ENCODE measurements at regions of chr19 and their contacts with region 1.

Region 1: GRCh38 chr19:11374433-11375142 is at the start of gene SWSAP1:
- DNase-seq: peak; percentile 95
- ATAC-seq: peak; percentile 91
- H3K4me3 Mint-ChIP-seq: peak within 1 kb of the TSS; percentile 36
- H3K27ac Mint-ChIP-seq: no peak within 1 kb of the TSS
- H3K4me1 Mint-ChIP-seq: peaks cover 13% of the 10 kb centered on the region
- H3K27me3 Mint-ChIP-seq: no peaks in the 10 kb centered on the region
- total RNA-seq, gene SWSAP1: 3.0 to 3.3 TPM

Region 2: DNA sequence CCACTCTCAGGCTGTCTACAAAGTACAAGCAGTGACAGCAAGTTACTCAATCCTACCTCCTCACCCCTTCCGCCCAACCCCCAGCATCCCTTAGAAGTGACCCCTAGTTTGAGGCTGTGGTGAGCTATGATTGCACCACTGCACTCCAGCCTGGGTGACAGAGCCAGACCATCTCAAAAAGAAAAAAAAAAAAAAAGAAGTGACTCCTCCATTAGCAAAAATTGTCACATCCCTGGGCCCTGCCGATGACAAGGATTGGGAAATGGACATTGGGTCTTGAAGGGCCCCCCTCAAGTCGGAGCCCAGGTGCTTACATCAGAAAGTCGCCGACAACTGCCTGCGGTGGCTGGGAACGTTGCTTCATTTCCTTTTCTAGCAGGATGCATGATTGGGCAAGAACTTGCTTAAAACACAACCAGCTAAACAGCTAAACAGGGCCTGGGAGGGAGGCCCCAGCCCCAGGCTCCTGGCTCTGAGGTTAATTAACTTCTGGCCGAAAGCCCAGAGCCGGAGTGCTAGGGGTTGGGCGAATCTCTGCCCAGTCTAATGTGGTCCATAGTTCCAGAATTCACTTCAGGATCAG is 50.4 kb before region 1 on chr19:
- POLR2A ChIA-PET with region 1: interaction called, 34 read pairs
- DNase-seq: peak; percentile 67
- ATAC-seq: peak; percentile 89
- H3K4me3 Mint-ChIP-seq: peak overlapping the region; percentile 69
- H3K27ac Mint-ChIP-seq: peak overlapping the region; percentile 96
- H3K4me1 Mint-ChIP-seq: peaks cover 30% of the 10 kb centered on the region
- H3K27me3 Mint-ChIP-seq: peaks cover 3% of the 10 kb centered on the region

Region 3: GRCh38 chr19:11346092-11346940 is 28.3 kb before region 1 on chr19 and contains the starts of genes CCDC159 and TMEM205:
- POLR2A ChIA-PET with region 1: interaction called, 23 read pairs
- DNase-seq: peak; percentile 93
- ATAC-seq: peak; percentile 99
- H3K4me3 Mint-ChIP-seq: peak within 1 kb of the TSS; percentile 92
- H3K27ac Mint-ChIP-seq: peak within 1 kb of the TSS; percentile 90
- H3K4me1 Mint-ChIP-seq: peaks cover 22% of the 10 kb centered on the region
- H3K27me3 Mint-ChIP-seq: no peaks in the 10 kb centered on the region
- total RNA-seq, gene CCDC159: 36.2 to 40.7 TPM
- total RNA-seq, gene TMEM205: 29.4 to 35.2 TPM

Region 4: DNA sequence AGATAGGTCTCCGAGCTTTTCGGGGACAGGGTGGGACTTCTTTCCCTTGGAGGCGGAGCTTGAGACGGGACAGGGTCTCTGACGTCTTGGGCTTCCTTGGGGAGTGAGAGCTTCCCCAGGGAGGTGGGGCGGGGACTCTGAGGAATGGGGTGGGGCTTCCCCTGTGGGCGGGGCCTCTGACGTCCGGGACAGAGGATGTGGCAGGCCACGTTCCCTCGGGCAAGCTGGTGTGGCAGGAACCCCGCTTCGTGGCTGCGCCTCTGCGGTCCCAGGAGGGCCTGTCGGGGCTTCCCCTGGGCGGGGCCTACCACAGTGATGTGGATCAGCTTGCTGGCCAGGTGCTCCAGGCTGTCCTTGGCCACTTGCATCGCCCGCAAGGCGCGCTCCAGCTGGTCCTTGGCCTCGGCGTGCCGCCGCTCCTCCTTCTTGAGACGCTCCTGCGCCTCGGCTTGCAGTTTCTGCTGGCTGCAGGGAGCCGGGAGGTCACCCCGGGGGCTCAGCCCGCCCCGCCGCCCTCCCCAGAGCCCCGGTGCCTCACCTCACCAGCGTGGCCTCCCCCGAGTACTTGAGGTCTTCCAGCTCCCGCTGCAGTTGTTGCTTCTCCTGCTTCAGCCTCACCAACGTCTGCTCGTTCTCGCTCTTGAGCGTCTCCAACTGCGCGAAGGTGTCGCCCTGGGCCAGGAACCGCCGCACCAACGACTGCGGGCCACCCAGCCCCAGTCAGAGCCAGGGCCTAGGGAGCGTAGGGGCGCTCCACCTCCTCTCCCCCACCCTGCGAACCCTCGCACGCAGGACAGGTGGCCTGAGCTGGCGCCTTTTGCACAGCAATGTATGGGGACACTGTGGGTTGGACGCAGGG is 47.8 kb after region 1 on chr19:
- POLR2A ChIA-PET with region 1: interaction called, 15 read pairs
- DNase-seq: peak; percentile 88
- ATAC-seq: peak; percentile 76
- H3K4me3 Mint-ChIP-seq: peak overlapping the region; percentile 80
- H3K27ac Mint-ChIP-seq: no peak overlapping the region
- H3K4me1 Mint-ChIP-seq: peaks cover 34% of the 10 kb centered on the region
- H3K27me3 Mint-ChIP-seq: peaks cover 63% of the 10 kb centered on the region

Region 5: GRCh38 chr19:11435058-11435832 is 60.7 kb after region 1 on chr19 and contains the starts of genes ODAD3 and PRKCSH:
- POLR2A ChIA-PET with region 1: interaction called, 11 read pairs
- DNase-seq: peak; percentile 96
- ATAC-seq: peak; percentile 97
- H3K4me3 Mint-ChIP-seq: peak within 1 kb of the TSS; percentile 99
- H3K27ac Mint-ChIP-seq: peak within 1 kb of the TSS; percentile 96
- H3K4me1 Mint-ChIP-seq: peaks cover 12% of the 10 kb centered on the region
- H3K27me3 Mint-ChIP-seq: peaks cover 2% of the 10 kb centered on the region
- total RNA-seq, gene ODAD3: not detected
- total RNA-seq, gene PRKCSH: 297 to 310 TPM

Region 6: GRCh38 chr19:11482384-11483050 is 107.9 kb after region 1 on chr19:
- POLR2A ChIA-PET with region 1: interaction called, 14 read pairs
- DNase-seq: peak; percentile 94
- ATAC-seq: peak; percentile 59
- H3K4me3 Mint-ChIP-seq: peak overlapping the region; percentile 74
- H3K27ac Mint-ChIP-seq: peak overlapping the region; percentile 73
- H3K4me1 Mint-ChIP-seq: peaks cover 13% of the 10 kb centered on the region
- H3K27me3 Mint-ChIP-seq: peaks cover 28% of the 10 kb centered on the region

Measured in activated naive CD8-positive, alpha-beta T cell treated with anti-CD3 and anti-CD28 coated beads, Interleukin-2, amount 10 ng/mL, durations not matched to agents 7 days and 5 days (primary cell).